Head of caudate nucleus (tissue), 42 donors: ENCODE measurements at regions of chr9 and their contacts with region 1.

Region 1: GRCh38 chr9:89422151-89422975 is 75.5 kb downstream of the SEMA4D start:
- DNase-seq: no peak

Region 2: GRCh38 chr9:89388084-89388867 is 34.1 kb before region 1 on chr9:
- intact Hi-C with region 1: no loop called
- DNase-seq: peak in 13 of 42 donors; percentile 23 to 66 (median 38)

Region 3: DNA sequence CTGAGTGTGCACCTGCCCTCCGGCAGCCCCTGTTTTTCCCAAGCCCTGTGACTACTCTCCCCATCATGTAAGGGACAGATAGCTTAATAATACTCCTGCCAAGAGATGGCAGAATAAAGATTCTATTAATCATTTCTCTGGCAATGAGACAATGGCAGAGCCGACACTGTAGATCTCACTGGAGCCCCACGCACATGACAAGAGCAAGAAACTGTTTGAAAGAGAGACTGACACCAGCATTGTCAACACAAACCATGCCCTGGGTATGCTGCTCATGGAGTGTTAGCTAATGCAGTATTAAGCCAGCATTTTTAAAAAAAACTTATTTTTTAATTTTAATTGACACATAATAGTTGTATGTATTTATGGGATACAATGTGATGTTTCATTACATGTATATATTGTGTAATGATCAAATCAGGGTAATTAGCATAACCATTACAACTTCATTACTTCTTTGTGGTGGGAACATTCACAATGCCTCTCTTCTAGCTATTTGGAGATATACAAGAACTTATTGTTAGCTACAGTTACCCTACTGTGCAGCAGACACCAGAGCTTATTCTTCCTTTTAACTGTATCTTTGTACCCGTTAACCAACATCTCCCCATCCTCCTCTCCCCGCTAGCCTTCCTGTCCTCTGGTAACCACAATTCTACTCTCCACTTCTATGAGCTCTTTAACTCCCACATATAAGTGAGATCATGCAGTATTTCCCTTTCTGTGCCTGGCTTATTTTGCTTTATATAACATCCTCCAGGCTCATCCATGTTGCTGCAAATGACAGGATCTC is 107.1 kb after region 1 on chr9:
- intact Hi-C with region 1: loop called (anchors 5 kb)
- DNase-seq: peak in 33 of 42 donors; percentile 34 to 82 (median 62)